ENCODE measurements at regions of chr22 and their contacts with region 1.

Region 1: DNA sequence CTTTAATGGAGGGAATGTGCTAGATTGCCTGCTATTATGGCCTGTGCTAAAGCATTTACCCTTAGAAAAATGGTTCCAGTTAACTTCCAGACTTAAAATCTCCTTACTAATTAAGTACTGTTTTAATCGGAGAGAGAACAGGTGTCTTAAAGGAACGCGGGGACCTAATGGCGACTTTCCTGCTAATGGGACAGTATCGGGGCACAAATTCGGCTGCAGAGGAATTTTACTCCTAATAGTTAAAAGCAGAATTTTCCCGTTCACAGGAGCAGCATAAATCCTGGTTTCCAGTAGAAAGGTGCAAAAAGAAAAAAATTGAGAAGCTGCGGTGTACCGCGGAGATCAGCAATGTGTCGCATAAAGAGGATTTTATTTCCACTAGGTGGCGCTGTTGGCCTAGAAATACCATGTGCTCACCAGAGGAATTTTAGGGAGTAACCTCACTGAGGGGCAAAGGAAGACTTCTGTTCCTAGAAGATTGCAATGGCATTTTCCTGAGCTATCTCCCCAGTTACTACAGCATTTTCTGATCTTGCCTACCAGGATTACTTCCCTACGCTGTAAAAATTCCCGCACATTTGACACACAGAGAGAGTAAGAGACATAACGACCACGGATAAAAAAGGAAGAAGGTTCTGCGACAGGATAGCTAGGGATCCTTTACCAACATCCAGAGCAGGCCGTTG is 44.5 kb downstream of the ZNF280B start:
- DNase-seq: peak in 1 of 2 experiments; percentile 79
- H3K4me3 ChIP-seq: peak overlapping the region in 1 of 4 experiments; percentile 37; a peak in 1 of 8 replicates
- H3K27ac ChIP-seq: no peak overlapping the region
- H3K4me1 ChIP-seq: peaks cover 0 to 18% (median 3%) of the 10 kb centered on the region in 4 experiments; a peak in 3 of 7 replicates
- H3K27me3 ChIP-seq: peaks cover 3 to 26% (median 18%) of the 10 kb centered on the region in 4 experiments; a peak in 5 of 7 replicates
- CTCF ChIP-seq: peak; percentile 15 to 85 (median 66)
- EP300 ChIP-seq: no peak
- POLR2A ChIP-seq: no peak
- RAD21 ChIP-seq: peak; percentile 91

Region 2: GRCh38 chr22:22329792-22330191 is 134.2 kb before region 1 on chr22:
- CTCF ChIA-PET with region 1: no interaction called
- POLR2A ChIA-PET with region 1: no interaction called
- DNase-seq: no peak
- H3K4me3 ChIP-seq: no peak overlapping the region
- H3K27ac ChIP-seq: no peak overlapping the region
- H3K4me1 ChIP-seq: no peaks in the 10 kb centered on the region
- H3K27me3 ChIP-seq: peaks cover 71 to 100% (median 97%) of the 10 kb centered on the region in 4 experiments
- CTCF ChIP-seq: no peak
- EP300 ChIP-seq: no peak
- POLR2A ChIP-seq: no peak
- RAD21 ChIP-seq: no peak

Region 3: DNA sequence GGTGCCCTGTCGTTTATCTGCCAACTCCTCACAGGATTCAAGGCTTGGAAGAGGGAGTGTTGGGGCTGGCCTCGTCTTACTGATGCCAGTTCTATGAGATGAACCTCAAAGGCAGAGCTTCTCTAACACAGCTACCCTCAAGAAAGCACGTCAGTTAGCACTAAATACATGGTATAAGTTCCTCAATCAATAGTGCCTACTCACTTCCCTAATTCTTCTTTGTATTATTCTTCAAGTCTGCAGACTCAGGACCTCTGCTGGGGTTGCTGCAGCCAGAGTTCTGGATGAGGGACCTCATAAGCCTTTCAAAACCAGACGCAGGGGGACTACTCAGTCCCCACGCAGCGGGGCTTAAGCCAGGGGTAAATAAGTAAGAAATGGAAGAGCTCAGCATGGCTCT is 101.1 kb before region 1 on chr22:
- CTCF ChIA-PET with region 1: no interaction called
- POLR2A ChIA-PET with region 1: no interaction called
- DNase-seq: no peak
- H3K4me3 ChIP-seq: no peak overlapping the region
- H3K27ac ChIP-seq: no peak overlapping the region
- H3K4me1 ChIP-seq: no peaks in the 10 kb centered on the region
- H3K27me3 ChIP-seq: peaks cover 61 to 100% (median 92%) of the 10 kb centered on the region in 4 experiments
- CTCF ChIP-seq: no peak
- EP300 ChIP-seq: no peak
- POLR2A ChIP-seq: no peak
- RAD21 ChIP-seq: no peak

Region 4: DNA sequence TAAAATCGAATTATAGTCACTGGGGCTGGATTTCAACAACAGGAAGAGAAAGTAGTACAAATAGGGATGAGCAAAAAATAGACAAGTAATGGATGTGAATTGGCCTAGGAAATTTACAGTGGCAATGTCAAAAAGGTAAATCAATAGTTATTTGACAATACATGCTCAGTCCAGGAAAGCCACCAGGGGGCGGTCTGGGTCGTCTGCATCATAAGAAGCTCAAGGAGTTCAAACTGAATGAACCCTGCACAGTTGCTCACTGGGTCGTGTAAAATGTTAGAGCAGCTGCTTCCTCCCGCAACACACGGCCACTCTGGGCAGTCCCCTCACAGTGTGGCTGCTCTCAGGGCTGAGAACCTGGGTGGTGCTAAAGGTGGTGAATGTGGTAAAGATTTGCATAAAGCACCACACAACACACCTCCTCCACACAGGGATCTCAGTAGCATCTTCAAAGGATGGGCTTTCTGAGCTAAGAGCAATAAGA is 41.3 kb before region 1 on chr22:
- CTCF ChIA-PET with region 1: interaction called, 41 read pairs
- POLR2A ChIA-PET with region 1: no interaction called
- DNase-seq: peak; percentile 21 to 85
- H3K4me3 ChIP-seq: no peak overlapping the region
- H3K27ac ChIP-seq: no peak overlapping the region
- H3K4me1 ChIP-seq: no peaks in the 10 kb centered on the region; a peak in 1 of 7 replicates
- H3K27me3 ChIP-seq: peaks cover 63 to 93% (median 88%) of the 10 kb centered on the region in 4 experiments
- CTCF ChIP-seq: peak; percentile 52 to 75 (median 72)
- EP300 ChIP-seq: no peak
- POLR2A ChIP-seq: no peak
- RAD21 ChIP-seq: peak; percentile 39 to 49; a peak in 3 of 4 replicates

Region 5: GRCh38 chr22:22450343-22450839 is 13.6 kb before region 1 on chr22:
- CTCF ChIA-PET with region 1: interaction called, 38 read pairs
- POLR2A ChIA-PET with region 1: no interaction called
- DNase-seq: no peak
- H3K4me3 ChIP-seq: no peak overlapping the region
- H3K27ac ChIP-seq: no peak overlapping the region
- H3K4me1 ChIP-seq: peaks cover 0 to 2% (median 0%) of the 10 kb centered on the region in 4 experiments; a peak in 1 of 7 replicates
- H3K27me3 ChIP-seq: peaks cover 43 to 95% (median 76%) of the 10 kb centered on the region in 4 experiments
- CTCF ChIP-seq: no peak
- EP300 ChIP-seq: no peak
- POLR2A ChIP-seq: no peak
- RAD21 ChIP-seq: no peak

Region 6: GRCh38 chr22:22479999-22480532 is 16.1 kb after region 1 on chr22:
- CTCF ChIA-PET with region 1: interaction called, 45 read pairs
- POLR2A ChIA-PET with region 1: no interaction called
- DNase-seq: no peak
- H3K4me3 ChIP-seq: no peak overlapping the region
- H3K27ac ChIP-seq: no peak overlapping the region
- H3K4me1 ChIP-seq: no peaks in the 10 kb centered on the region
- H3K27me3 ChIP-seq: peaks cover 0 to 26% (median 5%) of the 10 kb centered on the region in 4 experiments; a peak in 4 of 7 replicates
- CTCF ChIP-seq: no peak
- EP300 ChIP-seq: no peak
- POLR2A ChIP-seq: no peak
- RAD21 ChIP-seq: no peak

Region 7: DNA sequence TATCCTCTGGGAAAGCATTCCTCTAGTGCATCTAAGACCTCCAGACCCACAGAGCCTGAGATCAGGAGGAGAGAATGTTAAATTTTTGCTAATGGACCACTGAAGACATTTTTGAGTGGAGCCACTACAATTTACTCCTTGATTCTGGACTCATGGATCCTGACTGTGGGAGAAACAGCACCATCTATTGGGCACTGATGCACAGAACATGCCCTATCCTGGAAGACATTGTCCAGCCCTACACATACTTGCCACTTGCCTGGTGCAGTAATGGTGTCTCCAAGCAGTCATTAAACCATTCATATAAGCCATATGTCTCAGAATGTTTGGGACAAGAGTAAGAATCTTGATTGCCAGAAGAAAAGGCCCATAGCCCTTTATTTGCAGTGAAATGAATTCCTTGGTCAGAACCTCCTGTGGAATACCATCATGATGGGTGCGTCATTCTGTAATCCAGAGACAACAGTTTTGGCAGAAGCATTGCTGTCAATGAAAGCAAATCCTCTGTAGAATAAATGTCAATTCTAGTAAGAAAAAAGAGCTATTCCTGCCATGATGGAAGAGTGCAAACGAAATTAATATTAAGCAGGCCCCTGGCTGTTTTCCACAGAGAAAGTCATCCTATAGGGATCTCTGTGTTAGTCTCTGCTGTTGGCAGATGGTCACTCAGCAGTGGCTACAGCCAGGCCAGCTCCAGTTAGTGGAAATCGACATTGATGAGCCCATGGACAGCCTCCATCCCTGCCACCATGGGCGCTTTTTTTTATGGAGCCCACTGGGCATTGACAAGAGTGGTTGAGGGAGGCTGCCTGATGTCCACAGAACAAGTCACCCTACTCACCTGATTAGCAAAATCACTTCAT is 223.9 kb after region 1 on chr22:
- CTCF ChIA-PET with region 1: no interaction called
- POLR2A ChIA-PET with region 1: no interaction called
- DNase-seq: no peak
- H3K4me3 ChIP-seq: no peak overlapping the region
- H3K27ac ChIP-seq: no peak overlapping the region
- H3K4me1 ChIP-seq: no peaks in the 10 kb centered on the region
- H3K27me3 ChIP-seq: peaks cover 24 to 53% (median 38%) of the 10 kb centered on the region in 4 experiments; a peak in 5 of 7 replicates
- CTCF ChIP-seq: peak; percentile 24 to 59 (median 46)
- EP300 ChIP-seq: no peak
- POLR2A ChIP-seq: no peak
- RAD21 ChIP-seq: peak; percentile 38 to 46

Region 8: GRCh38 chr22:22720201-22720723 is 256.3 kb after region 1 on chr22:
- CTCF ChIA-PET with region 1: no interaction called
- POLR2A ChIA-PET with region 1: no interaction called
- DNase-seq: peak in 1 of 2 experiments; percentile 76
- H3K4me3 ChIP-seq: no peak overlapping the region
- H3K27ac ChIP-seq: no peak overlapping the region
- H3K4me1 ChIP-seq: no peaks in the 10 kb centered on the region
- H3K27me3 ChIP-seq: peaks cover 9 to 41% (median 31%) of the 10 kb centered on the region in 4 experiments
- CTCF ChIP-seq: peak; percentile 23 to 65 (median 59)
- EP300 ChIP-seq: no peak
- POLR2A ChIP-seq: no peak
- RAD21 ChIP-seq: peak; percentile 25 to 42; a peak in 3 of 4 replicates

Region 9: DNA sequence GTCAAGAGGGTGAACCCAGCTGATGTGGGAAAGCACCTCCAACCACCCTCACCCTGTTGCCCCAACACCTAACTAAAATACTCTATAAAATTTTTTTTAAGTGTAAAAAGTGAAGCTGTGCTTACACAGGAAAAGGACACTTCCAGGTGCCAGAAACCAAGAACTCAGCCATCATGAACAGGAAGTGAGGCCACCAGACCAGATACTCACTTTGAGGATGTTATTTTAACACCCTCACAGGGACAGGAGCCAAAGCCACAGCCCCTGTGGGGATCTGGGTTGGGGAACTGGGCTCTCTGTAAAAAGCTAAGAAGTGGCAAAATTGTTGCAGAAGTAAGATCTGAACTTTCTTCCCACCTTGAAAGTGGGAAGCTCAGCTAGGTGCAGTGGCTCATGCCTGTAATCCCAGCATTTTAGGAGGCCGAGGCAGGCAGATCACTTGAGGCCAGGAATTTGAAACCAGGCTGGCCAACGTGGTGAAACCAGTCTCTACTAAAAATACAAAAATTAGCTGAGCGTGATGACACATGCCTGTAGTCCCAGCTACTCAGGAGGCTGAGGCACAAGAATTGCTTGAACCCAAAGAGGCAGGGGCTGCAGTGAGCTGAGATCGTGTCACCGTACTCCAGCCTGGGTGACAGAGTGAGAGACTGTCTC is 674.0 kb after region 1 on chr22:
- CTCF ChIA-PET with region 1: interaction called, 16 read pairs
- POLR2A ChIA-PET with region 1: no interaction called
- DNase-seq: no peak
- H3K4me3 ChIP-seq: no peak overlapping the region
- H3K27ac ChIP-seq: no peak overlapping the region
- H3K4me1 ChIP-seq: peaks cover 2 to 6% (median 3%) of the 10 kb centered on the region in 4 experiments; a peak in 4 of 7 replicates
- H3K27me3 ChIP-seq: no peaks in the 10 kb centered on the region
- CTCF ChIP-seq: no peak
- EP300 ChIP-seq: no peak
- POLR2A ChIP-seq: no peak
- RAD21 ChIP-seq: no peak